ENCODE measurements at regions of chr1 and their contacts with region 1.

Region 1: DNA sequence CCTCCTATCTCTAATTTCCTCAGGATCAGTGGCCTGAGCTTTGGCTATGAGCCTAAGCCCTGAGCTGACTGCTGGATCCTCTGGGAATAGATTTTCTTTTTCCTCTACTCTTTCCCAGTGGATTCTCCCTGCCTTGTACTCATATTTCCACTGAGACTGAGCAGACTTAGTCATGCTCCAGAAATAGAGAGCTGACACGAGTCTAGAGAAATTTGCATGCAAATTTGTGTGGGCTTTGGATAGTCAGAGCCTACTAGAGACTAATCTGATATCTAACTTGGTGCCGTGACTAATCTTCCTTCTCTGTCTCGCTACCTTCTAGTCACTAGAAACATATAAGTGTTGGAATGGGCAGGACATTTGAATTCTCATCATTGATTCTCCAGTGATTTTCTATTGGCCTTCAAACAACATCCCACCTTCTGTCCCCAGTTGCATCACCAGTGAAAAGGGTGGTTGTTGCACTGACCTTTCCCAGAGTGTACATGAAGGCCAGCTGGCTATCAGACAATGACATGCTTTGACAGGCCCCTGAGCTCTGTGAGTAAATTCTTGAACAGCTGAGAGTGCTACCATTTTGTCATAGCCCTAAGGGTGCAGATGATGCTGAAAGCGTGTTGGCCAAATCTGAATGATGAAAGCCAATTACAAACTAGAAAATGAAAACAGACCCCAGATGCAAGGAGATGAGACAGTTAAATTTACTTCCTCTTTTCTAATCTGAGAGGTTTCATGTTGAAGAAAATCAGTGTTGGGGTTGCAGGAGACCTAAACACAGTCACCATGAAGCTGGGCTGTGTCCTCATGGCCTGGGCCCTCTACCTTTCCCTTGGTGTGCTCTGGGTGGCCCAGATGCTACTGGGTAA is at the start of gene FCRLA:
- DNase-seq: no peak
- ATAC-seq: peak; percentile 90
- H3K4me3 Mint-ChIP-seq: no peak within 1 kb of the TSS
- H3K27ac Mint-ChIP-seq: no peak within 1 kb of the TSS
- H3K4me1 Mint-ChIP-seq: no peaks in the 10 kb centered on the region
- H3K27me3 Mint-ChIP-seq: peaks cover 13% of the 10 kb centered on the region
- total RNA-seq, gene FCRLA: not detected

Region 2: GRCh38 chr1:161153679-161154426 is 552.9 kb before region 1 on chr1 and contains the start of gene UFC1:
- CTCF ChIA-PET with region 1: no interaction called
- POLR2A ChIA-PET with region 1: no interaction called
- intact Hi-C with region 1: no loop called
- DNase-seq: peak; percentile 89
- ATAC-seq: peak; percentile 98
- H3K4me3 Mint-ChIP-seq: peak within 1 kb of the TSS; percentile 94
- H3K27ac Mint-ChIP-seq: peak within 1 kb of the TSS; percentile 99
- H3K4me1 Mint-ChIP-seq: peaks cover 20% of the 10 kb centered on the region
- H3K27me3 Mint-ChIP-seq: no peaks in the 10 kb centered on the region
- total RNA-seq, gene UFC1: 89.2 to 98.6 TPM

Region 3: DNA sequence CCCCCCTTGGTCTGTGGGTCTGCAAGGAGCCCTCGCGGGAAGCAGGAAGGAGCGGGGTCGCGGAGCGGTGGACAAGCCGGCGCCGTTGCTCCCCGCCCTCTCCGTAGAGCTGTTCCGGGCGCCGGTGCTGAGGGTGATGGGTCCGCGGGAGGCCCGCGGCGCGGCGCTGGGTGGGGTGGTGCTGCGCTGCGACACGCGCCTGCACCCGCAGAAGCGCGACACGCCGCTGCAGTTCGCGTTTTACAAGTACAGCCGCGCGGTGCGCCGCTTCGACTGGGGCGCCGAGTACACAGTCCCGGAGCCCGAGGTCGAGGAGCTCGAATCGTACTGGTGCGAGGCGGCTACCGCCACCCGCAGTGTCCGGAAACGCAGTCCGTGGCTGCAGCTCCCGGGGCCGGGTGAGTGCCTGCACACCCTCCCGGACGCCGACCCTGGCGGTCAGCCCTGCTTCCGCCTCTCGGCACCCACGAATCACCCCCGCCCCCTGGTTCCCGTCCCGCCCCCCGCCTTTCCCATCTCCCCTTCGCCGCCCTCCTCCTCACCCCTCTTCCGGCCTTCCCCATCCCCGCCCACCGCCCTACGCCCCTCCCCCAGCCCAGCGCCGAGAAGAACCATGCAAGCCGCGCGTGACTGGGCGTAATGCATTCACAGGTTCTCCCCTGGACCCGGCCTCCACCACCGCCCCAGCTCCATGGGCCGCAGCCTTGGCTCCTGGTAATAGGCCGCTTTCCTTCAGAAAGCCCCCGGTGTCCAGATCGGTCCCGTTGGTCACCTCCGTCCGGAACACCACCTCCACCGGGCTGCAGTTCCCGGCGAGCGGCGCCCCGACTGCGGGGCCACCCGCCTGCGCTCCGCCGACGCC is 20.1 kb after region 1 on chr1:
- CTCF ChIA-PET with region 1: interaction called, 5 read pairs
- POLR2A ChIA-PET with region 1: no interaction called
- intact Hi-C with region 1: loop called in 1 of 2 experiments (anchors 1 kb)
- DNase-seq: peak; percentile 72
- ATAC-seq: peak; percentile 51
- H3K4me3 Mint-ChIP-seq: peak overlapping the region; percentile 73
- H3K27ac Mint-ChIP-seq: no peak overlapping the region
- H3K4me1 Mint-ChIP-seq: peaks cover 47% of the 10 kb centered on the region
- H3K27me3 Mint-ChIP-seq: peaks cover 44% of the 10 kb centered on the region